CD4-positive, alpha-beta memory T cell (primary cell): ENCODE measurements at regions of chr1 and their contacts with region 1.

Region 1: DNA sequence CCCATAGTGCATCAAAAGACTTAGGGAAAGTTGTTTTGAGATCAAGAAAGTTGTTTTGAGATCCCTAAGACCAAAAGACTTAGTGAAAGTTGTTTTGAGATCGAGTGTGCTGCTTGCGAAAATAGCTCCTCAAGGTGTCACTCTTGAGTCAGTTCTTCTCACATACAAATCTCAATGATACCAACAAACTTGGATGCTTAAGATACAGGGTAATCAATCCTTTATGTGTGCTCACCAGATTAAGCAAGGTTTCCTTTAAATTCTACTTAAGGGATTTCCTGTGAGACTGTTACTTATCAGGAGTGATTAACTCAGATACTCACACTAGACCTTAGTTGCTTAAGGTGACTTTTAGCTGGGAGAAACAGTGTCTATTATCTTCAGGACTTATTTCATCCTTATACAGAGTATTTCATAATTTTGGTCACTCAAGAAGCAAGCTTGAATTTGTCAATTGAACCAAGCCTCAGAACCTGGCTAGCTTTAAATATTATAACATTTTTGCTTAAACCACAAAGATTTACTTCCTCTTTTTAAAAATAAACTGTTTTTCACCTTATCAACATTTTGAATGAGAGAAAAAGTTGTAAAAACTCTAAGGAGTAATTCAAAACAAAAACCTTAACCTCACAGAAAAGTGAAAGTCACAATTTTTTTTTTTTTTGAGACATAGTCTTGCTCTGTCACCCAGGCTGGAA is 8.0 kb upstream of the RLF start:
- DNase-seq: peak; percentile 38 to 58 (median 53)
- H3K4me3 ChIP-seq: no peak overlapping the region
- H3K4me3 Mint-ChIP-seq: peak overlapping the region in 5 of 8 donors; percentile 12 to 36 (median 26)
- H3K27ac ChIP-seq: no peak overlapping the region
- H3K27ac Mint-ChIP-seq: peak overlapping the region in 6 of 7 donors; percentile 25 to 77 (median 56)
- H3K4me1 ChIP-seq: no peaks in the 10 kb centered on the region
- H3K4me1 Mint-ChIP-seq: peaks cover 4 to 10% (median 5%) of the 10 kb centered on the region in 4 donors
- H3K27me3 ChIP-seq: no peaks in the 10 kb centered on the region
- H3K27me3 Mint-ChIP-seq: peaks cover 2 to 10% of the 10 kb centered on the region in 2 donors

Region 2: DNA sequence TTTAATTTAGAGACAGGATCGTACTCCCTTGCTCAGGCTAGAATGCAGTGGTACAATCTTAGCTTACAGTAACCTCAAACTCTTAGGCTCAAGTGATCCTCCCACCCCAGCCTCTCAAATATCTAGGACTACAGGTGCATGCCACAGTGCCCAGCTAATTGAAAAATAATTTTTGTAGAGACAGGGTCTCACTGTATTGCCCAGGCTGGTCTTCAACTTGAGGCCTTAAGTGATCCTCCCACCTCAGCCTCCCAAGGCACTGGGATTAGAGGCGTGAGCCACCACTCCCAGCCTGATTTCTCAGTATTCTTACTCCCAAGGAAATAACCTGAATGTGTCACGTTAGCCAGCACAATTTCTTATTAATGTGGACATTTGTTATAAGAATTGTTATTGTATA is 17.8 kb after region 1 on chr1:
- CTCF ChIA-PET with region 1: interaction called, 19 read pairs
- POLR2A ChIA-PET with region 1: no interaction called
- intact Hi-C with region 1: no loop called
- DNase-seq: no peak
- H3K4me3 ChIP-seq: no peak overlapping the region
- H3K4me3 Mint-ChIP-seq: peak overlapping the region in 1 of 8 donors; percentile 23
- H3K27ac ChIP-seq: no peak overlapping the region
- H3K27ac Mint-ChIP-seq: no peak overlapping the region
- H3K4me1 ChIP-seq: peaks cover 59% of the 10 kb centered on the region
- H3K4me1 Mint-ChIP-seq: peaks cover 27 to 57% (median 38%) of the 10 kb centered on the region in 4 donors
- H3K27me3 ChIP-seq: no peaks in the 10 kb centered on the region
- H3K27me3 Mint-ChIP-seq: no peaks in the 10 kb centered on the region

Region 3: DNA sequence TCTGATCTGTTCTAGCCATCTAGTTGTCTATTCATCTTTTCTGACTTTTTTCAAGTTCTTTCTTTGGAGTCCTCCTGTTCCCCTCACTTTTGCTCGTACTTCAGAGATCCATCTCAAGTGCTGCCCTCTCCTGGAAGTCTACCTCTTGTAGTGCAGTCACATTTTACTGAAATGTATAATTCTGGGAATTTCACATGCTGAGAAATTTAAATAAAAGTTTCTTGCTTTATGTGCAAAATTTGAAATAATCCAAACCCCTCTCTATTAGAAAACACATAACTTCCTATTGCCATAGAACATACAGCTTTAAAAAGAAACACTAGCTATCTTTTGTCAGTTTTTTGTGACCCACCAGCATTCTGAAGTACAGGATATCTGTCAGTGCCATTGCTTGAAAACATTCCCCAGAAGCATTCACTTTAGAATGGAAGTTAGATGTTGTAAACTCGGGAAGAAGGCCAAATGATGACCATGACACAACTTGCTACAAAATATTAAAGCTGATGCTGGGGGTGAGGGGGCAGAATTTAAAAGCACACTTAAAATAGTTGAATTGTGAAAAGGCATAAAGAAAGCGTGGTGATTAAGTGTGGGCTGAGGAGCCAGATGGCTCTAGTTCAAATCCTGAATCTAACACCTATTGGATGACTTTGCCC is 30.0 kb after region 1 on chr1:
- CTCF ChIA-PET with region 1: interaction called, 12 read pairs
- POLR2A ChIA-PET with region 1: no interaction called
- intact Hi-C with region 1: no loop called
- DNase-seq: peak in 1 of 5 donors; percentile 6
- H3K4me3 ChIP-seq: no peak overlapping the region
- H3K4me3 Mint-ChIP-seq: peak overlapping the region in 4 of 8 donors; percentile 5 to 21 (median 15)
- H3K27ac ChIP-seq: no peak overlapping the region
- H3K27ac Mint-ChIP-seq: peak overlapping the region in 4 of 7 donors; percentile 24 to 76 (median 46)
- H3K4me1 ChIP-seq: peaks cover 70% of the 10 kb centered on the region
- H3K4me1 Mint-ChIP-seq: peaks cover 51 to 83% (median 62%) of the 10 kb centered on the region in 4 donors
- H3K27me3 ChIP-seq: no peaks in the 10 kb centered on the region
- H3K27me3 Mint-ChIP-seq: no peaks in the 10 kb centered on the region

Region 4: DNA sequence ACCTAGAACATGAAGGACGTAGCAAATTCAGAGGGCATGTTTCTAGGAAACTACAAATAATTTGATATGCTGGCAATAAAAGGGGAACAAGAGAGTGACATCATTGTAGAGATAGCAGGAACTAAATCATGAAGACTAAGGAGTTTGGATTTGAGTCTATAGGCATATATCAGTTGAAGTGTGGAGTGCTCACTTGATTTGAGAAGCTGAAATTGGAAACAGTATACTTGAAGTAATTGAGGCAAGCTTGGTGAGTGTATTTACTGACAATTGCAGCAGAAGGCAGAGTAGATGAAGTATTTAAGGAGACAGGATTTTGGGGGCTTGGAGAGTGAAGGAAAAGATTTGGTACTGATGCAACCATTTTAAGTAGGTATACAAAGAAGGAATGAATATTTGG is 88.1 kb after region 1 on chr1:
- CTCF ChIA-PET with region 1: interaction called, 16 read pairs
- POLR2A ChIA-PET with region 1: no interaction called
- intact Hi-C with region 1: no loop called
- DNase-seq: no peak
- H3K4me3 ChIP-seq: no peak overlapping the region
- H3K4me3 Mint-ChIP-seq: peak overlapping the region in 6 of 8 donors; percentile 8 to 52 (median 26)
- H3K27ac ChIP-seq: no peak overlapping the region
- H3K27ac Mint-ChIP-seq: peak overlapping the region; percentile 34 to 90 (median 65)
- H3K4me1 ChIP-seq: peaks cover 16% of the 10 kb centered on the region
- H3K4me1 Mint-ChIP-seq: peaks cover 12 to 32% (median 16%) of the 10 kb centered on the region in 4 donors
- H3K27me3 ChIP-seq: no peaks in the 10 kb centered on the region
- H3K27me3 Mint-ChIP-seq: no peaks in the 10 kb centered on the region

Region 5: GRCh38 chr1:40257688-40258444 is 104.6 kb after region 1 on chr1 and contains the start of gene ZMPSTE24:
- CTCF ChIA-PET with region 1: interaction called, 16 read pairs
- POLR2A ChIA-PET with region 1: no interaction called
- intact Hi-C with region 1: no loop called
- DNase-seq: peak; percentile 95 to 99 (median 96)
- H3K4me3 ChIP-seq: peak within 1 kb of the TSS; percentile 86 to 99
- H3K4me3 Mint-ChIP-seq: peak within 1 kb of the TSS; percentile 92 to 99 (median 96)
- H3K27ac ChIP-seq: peak within 1 kb of the TSS; percentile 98
- H3K27ac Mint-ChIP-seq: peak within 1 kb of the TSS; percentile 98 to 100 (median 99)
- H3K4me1 ChIP-seq: peaks cover 37% of the 10 kb centered on the region
- H3K4me1 Mint-ChIP-seq: peaks cover 25 to 58% (median 38%) of the 10 kb centered on the region in 4 donors
- H3K27me3 ChIP-seq: no peaks in the 10 kb centered on the region
- H3K27me3 Mint-ChIP-seq: no peaks in the 10 kb centered on the region
- total RNA-seq, gene ZMPSTE24: 19.7 to 21.0 TPM

Region 6: GRCh38 chr1:40385437-40386358 is 232.5 kb after region 1 on chr1:
- CTCF ChIA-PET with region 1: interaction called, 13 read pairs
- POLR2A ChIA-PET with region 1: interaction called, 3 read pairs
- intact Hi-C with region 1: no loop called
- DNase-seq: peak; percentile 90 to 95 (median 93)
- H3K4me3 ChIP-seq: peak overlapping the region; percentile 45 to 67
- H3K4me3 Mint-ChIP-seq: peak overlapping the region; percentile 78 to 94 (median 87)
- H3K27ac ChIP-seq: peak overlapping the region; percentile 99
- H3K27ac Mint-ChIP-seq: peak overlapping the region; percentile 95 to 100 (median 99)
- H3K4me1 ChIP-seq: peaks cover 97% of the 10 kb centered on the region
- H3K4me1 Mint-ChIP-seq: peaks cover 75 to 95% (median 85%) of the 10 kb centered on the region in 4 donors
- H3K27me3 ChIP-seq: no peaks in the 10 kb centered on the region
- H3K27me3 Mint-ChIP-seq: no peaks in the 10 kb centered on the region

Region 7: DNA sequence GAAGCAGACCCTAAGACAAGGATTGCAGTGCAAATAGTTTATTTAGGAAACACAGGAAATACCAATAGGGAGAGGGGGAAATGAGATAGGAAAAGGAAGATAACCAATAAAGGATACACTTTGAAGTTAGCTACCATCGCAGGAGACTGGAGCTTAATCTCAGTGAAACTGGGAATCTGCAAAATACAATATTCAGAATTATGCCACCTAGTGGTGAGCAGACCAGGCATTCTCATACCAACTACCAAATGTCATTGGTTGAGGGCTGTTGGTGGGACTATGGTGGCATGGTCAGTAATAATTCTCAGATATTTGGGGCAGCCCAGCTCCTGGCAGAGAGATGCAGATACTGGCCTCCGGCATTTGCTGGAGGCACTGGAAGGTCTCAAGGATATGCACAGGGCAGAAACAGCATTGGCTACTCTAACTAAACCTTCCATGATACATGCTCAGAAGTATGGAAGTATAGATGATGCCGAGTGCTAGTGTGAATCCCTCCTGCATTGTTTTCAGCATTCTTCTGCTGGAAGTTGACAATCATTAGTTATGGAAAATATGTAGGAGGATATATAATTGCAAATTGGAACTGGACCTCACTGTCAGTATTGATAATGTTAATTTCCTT is 285.3 kb after region 1 on chr1:
- CTCF ChIA-PET with region 1: interaction called, 46 read pairs
- POLR2A ChIA-PET with region 1: no interaction called
- intact Hi-C with region 1: loop called (anchors 1 kb)
- DNase-seq: peak in 4 of 5 donors; percentile 19 to 44 (median 28)
- H3K4me3 ChIP-seq: no peak overlapping the region
- H3K4me3 Mint-ChIP-seq: no peak overlapping the region
- H3K27ac ChIP-seq: no peak overlapping the region
- H3K27ac Mint-ChIP-seq: no peak overlapping the region
- H3K4me1 ChIP-seq: no peaks in the 10 kb centered on the region
- H3K4me1 Mint-ChIP-seq: peaks cover 0 to 3% (median under 1%) of the 10 kb centered on the region in 4 donors
- H3K27me3 ChIP-seq: no peaks in the 10 kb centered on the region
- H3K27me3 Mint-ChIP-seq: no peaks in the 10 kb centered on the region